Lower leg skin (tissue), 4 donors: ENCODE measurements at regions of chr11 and their contacts with region 1.

Region 1: DNA sequence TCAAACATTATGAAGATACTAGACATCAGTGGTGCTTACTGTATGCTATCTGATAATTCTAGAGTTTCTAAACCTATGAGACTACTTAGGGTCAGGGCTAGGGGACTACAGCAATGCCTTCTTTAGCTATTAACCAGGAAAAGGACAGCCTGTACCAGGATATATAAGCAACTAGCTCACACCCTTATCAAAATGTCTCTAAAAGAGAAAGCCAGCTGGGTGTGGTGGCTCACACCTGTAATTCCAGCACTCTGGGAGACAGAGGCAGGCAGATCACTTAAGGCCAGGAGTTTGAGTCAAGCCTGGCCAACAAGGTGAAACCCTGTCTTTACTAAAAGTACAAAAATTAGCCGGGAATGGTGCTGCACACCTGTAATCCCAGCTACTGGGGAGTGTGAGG is 55.8 kb downstream of the RAB6A start:
- DNase-seq: no peak
- H3K4me3 ChIP-seq: no peak overlapping the region
- CTCF ChIP-seq: no peak
- POLR2A ChIP-seq: no peak

Region 2: DNA sequence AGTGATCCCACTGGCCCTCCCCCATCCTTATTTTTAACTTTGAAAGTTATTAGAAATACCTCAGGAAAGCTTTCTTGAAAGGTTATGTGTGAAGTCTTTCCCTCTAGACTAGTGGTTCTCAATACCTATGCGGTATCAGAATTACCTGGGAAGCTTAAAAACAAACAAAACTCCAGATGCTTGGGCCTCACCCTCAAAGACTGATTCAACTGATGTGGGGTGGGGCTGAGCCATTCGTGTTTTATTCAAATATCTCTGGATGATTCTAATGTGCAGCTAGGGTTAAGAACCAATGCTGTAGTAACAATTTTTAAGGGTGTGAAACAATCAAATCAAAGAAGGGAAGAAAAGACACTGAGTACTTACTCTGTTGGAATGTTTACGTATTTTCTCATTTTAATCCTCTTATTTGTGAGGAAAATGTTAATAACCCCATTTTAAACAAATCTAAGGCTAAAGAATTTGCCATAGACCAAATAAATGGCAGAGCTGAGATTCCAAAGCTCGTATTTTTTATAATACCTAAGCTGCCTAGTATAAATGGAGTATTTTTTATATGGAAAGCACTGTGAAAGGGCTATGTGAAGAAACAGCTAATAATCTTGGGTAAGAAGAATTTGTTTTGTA is 11.0 kb before region 1 on chr11:
- intact Hi-C with region 1: loop called (anchors 1 kb)
- DNase-seq: no peak
- H3K4me3 ChIP-seq: no peak overlapping the region
- CTCF ChIP-seq: no peak
- POLR2A ChIP-seq: no peak